ENCODE measurements at regions of chr10 and their contacts with region 1.

Region 1: GRCh38 chr10:49592726-49593563 is 17.2 kb upstream of the SLC18A3 start:
- DNase-seq: peak; percentile 29 to 69
- ATAC-seq: peak; percentile 62 to 86 (median 64)
- H3K4me3 ChIP-seq: no peak overlapping the region
- H3K4me3 Mint-ChIP-seq: no peak overlapping the region
- H3K27ac ChIP-seq: no peak overlapping the region
- H3K27ac Mint-ChIP-seq: no peak overlapping the region
- H3K4me1 ChIP-seq: no peaks in the 10 kb centered on the region
- H3K4me1 Mint-ChIP-seq: peaks cover 5 to 6% of the 10 kb centered on the region in 2 donors
- H3K27me3 ChIP-seq: peaks cover 3% of the 10 kb centered on the region
- H3K27me3 Mint-ChIP-seq: peaks cover 28 to 37% of the 10 kb centered on the region in 2 donors
- CTCF ChIP-seq: peak; percentile 83

Region 2: DNA sequence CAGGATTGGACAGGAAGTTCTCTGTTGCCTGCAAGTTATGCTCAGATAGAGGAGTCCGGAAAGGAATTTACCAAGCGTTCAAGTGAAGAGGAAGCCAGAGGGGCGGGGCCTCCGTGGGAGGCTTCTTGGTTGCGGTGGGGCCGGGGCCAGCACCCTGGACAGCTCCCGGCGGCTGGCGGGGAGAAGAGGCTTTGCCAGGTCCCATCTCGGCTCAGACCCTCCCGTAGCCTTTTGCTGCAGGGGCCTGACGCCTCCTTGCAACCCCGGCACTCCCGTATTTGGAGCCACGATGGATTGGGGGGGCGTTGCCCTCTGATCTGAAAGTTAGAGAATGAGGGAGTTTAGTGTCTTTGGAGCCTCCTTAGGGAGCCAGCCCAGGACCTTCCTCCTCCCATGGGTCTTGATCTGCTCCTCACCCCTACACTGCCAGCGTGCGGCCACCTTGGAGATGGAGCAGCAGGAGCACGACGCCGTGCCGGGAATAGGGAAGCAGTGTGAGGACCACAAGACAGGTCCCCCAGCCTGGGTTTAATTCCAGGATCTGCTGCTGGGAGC is 14.1 kb after region 1 on chr10:
- intact Hi-C with region 1: no loop called
- DNase-seq: peak; percentile 62 to 69
- ATAC-seq: peak; percentile 69 to 89 (median 84)
- H3K4me3 ChIP-seq: no peak overlapping the region
- H3K4me3 Mint-ChIP-seq: no peak overlapping the region
- H3K27ac ChIP-seq: no peak overlapping the region
- H3K27ac Mint-ChIP-seq: no peak overlapping the region
- H3K4me1 ChIP-seq: peaks cover 5% of the 10 kb centered on the region
- H3K4me1 Mint-ChIP-seq: peaks cover 11 to 14% of the 10 kb centered on the region in 2 donors
- H3K27me3 ChIP-seq: peaks cover 20% of the 10 kb centered on the region
- H3K27me3 Mint-ChIP-seq: peaks cover 38 to 72% of the 10 kb centered on the region in 2 donors
- CTCF ChIP-seq: no peak

Region 3: DNA sequence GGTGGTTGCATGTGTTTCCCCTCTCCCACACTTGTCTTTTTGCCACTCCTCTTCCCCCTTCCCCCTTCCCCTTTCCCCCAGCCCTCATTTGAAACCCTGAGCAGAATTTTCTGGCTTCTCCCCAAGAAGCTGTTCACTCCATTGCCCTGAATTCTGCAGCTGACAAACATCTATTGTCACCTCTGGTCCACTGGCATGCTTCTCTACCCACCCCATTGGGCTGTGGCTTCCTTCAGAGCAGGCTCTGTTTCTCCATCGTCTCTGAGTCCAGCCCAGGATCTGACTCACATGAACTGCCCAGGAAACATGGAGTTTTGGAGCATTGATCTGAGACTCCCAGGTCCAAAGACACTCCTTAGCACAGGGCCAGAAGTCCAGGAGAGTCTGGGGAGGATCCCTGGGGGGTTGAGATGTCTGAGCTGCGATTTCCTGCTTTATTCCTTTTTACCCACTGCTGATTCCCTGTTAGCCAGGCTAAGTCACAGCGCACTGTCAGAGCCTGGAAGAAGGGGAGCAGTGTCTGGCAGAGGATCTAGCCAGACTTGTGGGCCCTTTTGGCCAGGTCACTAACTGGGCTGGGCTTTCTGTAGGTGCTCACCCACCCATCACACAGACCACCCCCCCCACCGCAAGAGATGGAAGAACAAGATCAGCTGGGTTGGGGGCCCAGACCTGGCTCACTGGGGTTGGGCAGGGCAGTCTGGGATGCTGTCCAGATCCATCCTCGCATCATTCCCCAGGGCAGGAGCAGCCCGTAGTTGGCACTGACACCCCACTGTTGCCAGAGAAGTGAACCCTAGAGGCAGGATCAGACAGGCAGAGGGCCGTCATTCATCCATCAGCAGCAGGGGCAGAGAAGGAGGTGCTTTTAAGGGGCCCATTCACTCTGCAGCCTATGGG is 24.4 kb after region 1 on chr10:
- intact Hi-C with region 1: no loop called
- DNase-seq: no peak
- ATAC-seq: no peak
- H3K4me3 ChIP-seq: no peak overlapping the region
- H3K4me3 Mint-ChIP-seq: no peak overlapping the region
- H3K27ac ChIP-seq: no peak overlapping the region
- H3K27ac Mint-ChIP-seq: no peak overlapping the region
- H3K4me1 ChIP-seq: peaks cover 4% of the 10 kb centered on the region
- H3K4me1 Mint-ChIP-seq: peaks cover 0 to 9% of the 10 kb centered on the region in 2 donors
- H3K27me3 ChIP-seq: peaks cover 27% of the 10 kb centered on the region
- H3K27me3 Mint-ChIP-seq: peaks cover 56% of the 10 kb centered on the region in 2 donors
- CTCF ChIP-seq: no peak

Region 4: GRCh38 chr10:50224330-50224952 is 631.5 kb after region 1 on chr10:
- intact Hi-C with region 1: loop called (anchors 5 kb)
- DNase-seq: peak in 1 of 2 donors; percentile 52
- ATAC-seq: peak in 1 of 3 donors; percentile 54
- H3K4me3 ChIP-seq: no peak overlapping the region
- H3K4me3 Mint-ChIP-seq: no peak overlapping the region
- H3K27ac ChIP-seq: no peak overlapping the region
- H3K27ac Mint-ChIP-seq: no peak overlapping the region
- H3K4me1 ChIP-seq: no peaks in the 10 kb centered on the region
- H3K4me1 Mint-ChIP-seq: no peaks in the 10 kb centered on the region
- H3K27me3 ChIP-seq: peaks cover 3% of the 10 kb centered on the region
- H3K27me3 Mint-ChIP-seq: peaks cover 8 to 22% of the 10 kb centered on the region in 2 donors
- CTCF ChIP-seq: no peak

Region 5: GRCh38 chr10:50275650-50276235 is 682.8 kb after region 1 on chr10:
- intact Hi-C with region 1: loop called (anchors 5 kb)
- DNase-seq: peak in 1 of 2 donors; percentile 35
- ATAC-seq: peak in 1 of 3 donors; percentile 59
- H3K4me3 ChIP-seq: no peak overlapping the region
- H3K4me3 Mint-ChIP-seq: no peak overlapping the region
- H3K27ac ChIP-seq: no peak overlapping the region
- H3K27ac Mint-ChIP-seq: no peak overlapping the region
- H3K4me1 ChIP-seq: no peaks in the 10 kb centered on the region
- H3K4me1 Mint-ChIP-seq: no peaks in the 10 kb centered on the region
- H3K27me3 ChIP-seq: no peaks in the 10 kb centered on the region
- H3K27me3 Mint-ChIP-seq: peaks cover 6 to 27% of the 10 kb centered on the region in 2 donors
- CTCF ChIP-seq: no peak